Natural killer cell (primary cell): ENCODE measurements at regions of chr2 and their contacts with region 1.

Region 1: DNA sequence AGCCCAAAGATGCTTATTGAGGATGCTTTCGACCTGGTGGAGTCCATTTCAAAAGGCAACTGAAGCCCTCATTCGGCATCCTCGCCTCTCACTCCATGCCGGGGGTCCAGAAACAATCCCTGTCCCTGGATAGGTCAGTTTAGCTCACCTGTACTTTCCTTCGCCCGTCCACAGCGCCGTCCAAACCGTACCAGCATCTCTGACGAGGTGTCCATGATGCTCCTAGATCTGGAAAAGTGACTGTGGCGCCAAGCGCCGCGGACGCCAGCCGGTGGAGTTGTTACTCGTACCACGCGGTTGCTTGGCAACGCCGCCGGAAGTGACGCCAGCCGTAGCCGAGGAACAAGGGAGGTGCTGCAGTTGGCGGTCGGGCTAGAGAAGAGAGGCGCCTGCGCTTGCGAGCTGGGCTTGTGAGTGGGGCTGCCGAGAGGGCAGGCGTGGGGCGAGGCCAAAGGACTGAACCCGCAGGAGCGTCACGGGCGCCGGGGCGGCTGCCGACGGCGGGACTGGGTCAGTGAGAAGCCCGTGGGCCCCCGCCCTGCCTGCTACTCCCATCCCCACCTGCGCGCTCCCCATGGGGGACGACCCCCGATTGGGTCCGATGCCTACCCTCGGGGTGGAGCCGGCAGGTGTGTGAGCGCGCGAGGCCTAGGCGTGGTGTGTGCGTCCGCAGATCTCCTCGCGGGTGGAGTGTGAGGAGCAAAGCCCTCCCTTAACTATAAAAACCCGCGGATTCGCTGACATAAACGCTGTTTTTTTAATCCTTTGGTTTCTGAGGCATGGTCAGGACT is at the starts of genes CFAP210 and PHOSPHO2:
- DNase-seq: peak; percentile 99
- ATAC-seq: peak; percentile 93 to 99 (median 94)
- H3K4me3 ChIP-seq: peak within 1 kb of the TSS; percentile 64
- H3K4me3 Mint-ChIP-seq: peak within 1 kb of the TSS; percentile 97
- H3K27ac ChIP-seq: peak within 1 kb of the TSS; percentile 90
- H3K27ac Mint-ChIP-seq: peak within 1 kb of the TSS; percentile 97 to 98
- H3K4me1 ChIP-seq: peaks cover 11% of the 10 kb centered on the region
- H3K4me1 Mint-ChIP-seq: peaks cover 17 to 19% of the 10 kb centered on the region in 2 donors
- H3K27me3 ChIP-seq: peaks cover 3% of the 10 kb centered on the region
- H3K27me3 Mint-ChIP-seq: peaks cover 15 to 23% of the 10 kb centered on the region in 2 donors
- CTCF ChIP-seq: no peak
- total RNA-seq, gene CFAP210: 0.27 to 8.4 (median 1.5) TPM
- total RNA-seq, gene PHOSPHO2: 3.6 to 9.5 (median 5.8) TPM

Region 2: GRCh38 chr2:169584005-169584877 is 110.1 kb before region 1 on chr2 and contains the start of gene PPIG:
- intact Hi-C with region 1: loop called (anchors 2 kb)
- DNase-seq: peak; percentile 85 to 97
- ATAC-seq: peak; percentile 86 to 93 (median 87)
- H3K4me3 ChIP-seq: peak within 1 kb of the TSS; percentile 98
- H3K4me3 Mint-ChIP-seq: peak within 1 kb of the TSS; percentile 96
- H3K27ac ChIP-seq: peak within 1 kb of the TSS; percentile 99
- H3K27ac Mint-ChIP-seq: peak within 1 kb of the TSS; percentile 97 to 99
- H3K4me1 ChIP-seq: peaks cover 10% of the 10 kb centered on the region
- H3K4me1 Mint-ChIP-seq: peaks cover 31 to 32% of the 10 kb centered on the region in 2 donors
- H3K27me3 ChIP-seq: no peaks in the 10 kb centered on the region
- H3K27me3 Mint-ChIP-seq: no peaks in the 10 kb centered on the region
- CTCF ChIP-seq: no peak
- total RNA-seq, gene PPIG: 42.2 to 58.3 (median 56.1) TPM

Region 3: DNA sequence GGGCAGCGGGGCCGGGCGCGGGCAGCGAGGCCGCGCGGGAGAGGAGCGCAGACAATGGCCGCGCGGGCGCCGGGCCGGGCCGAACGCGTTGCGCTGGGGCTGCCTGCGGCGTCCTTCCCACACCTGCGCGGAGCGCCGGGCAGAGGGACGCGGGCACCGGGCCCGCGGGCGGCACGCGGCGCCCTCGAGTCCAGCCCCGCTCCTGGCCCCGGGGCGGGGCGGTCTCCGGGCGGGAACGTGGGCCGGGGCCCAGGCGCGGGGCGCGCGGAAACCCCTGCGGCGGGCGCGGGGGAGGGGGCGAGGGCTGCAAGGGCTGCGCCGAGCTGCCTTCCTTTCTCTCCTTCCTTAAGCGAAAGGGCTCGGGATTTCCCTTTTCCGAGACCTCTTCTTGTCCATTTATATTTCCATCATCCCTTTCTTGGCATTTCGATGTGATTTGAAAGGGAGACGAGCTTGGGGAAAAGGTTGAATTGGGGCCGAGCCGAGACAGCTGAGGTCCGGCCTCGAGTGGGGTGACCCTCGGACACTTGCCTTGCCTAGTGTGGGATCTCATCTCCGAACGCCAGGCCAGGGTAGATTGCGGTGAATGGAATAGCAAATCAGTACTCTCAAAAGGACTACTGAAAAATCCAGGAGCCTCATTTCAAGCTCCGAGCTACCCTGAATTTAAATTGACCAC is 40.0 kb after region 1 on chr2:
- intact Hi-C with region 1: loop called (anchors 5 kb)
- DNase-seq: peak; percentile 19 to 22
- ATAC-seq: peak; percentile 41 to 54 (median 42)
- H3K4me3 ChIP-seq: peak overlapping the region; percentile 37
- H3K4me3 Mint-ChIP-seq: peak overlapping the region; percentile 85
- H3K27ac ChIP-seq: no peak overlapping the region
- H3K27ac Mint-ChIP-seq: peak overlapping the region in 1 of 2 donors; percentile 88
- H3K4me1 ChIP-seq: peaks cover 17% of the 10 kb centered on the region
- H3K4me1 Mint-ChIP-seq: peaks cover 8 to 24% of the 10 kb centered on the region in 2 donors
- H3K27me3 ChIP-seq: peaks cover 5% of the 10 kb centered on the region
- H3K27me3 Mint-ChIP-seq: peaks cover 7 to 29% of the 10 kb centered on the region in 2 donors
- CTCF ChIP-seq: no peak

Region 4: GRCh38 chr2:169746240-169746639 is 51.9 kb after region 1 on chr2:
- intact Hi-C with region 1: no loop called
- DNase-seq: no peak
- ATAC-seq: no peak
- H3K4me3 ChIP-seq: no peak overlapping the region
- H3K4me3 Mint-ChIP-seq: no peak overlapping the region
- H3K27ac ChIP-seq: no peak overlapping the region
- H3K27ac Mint-ChIP-seq: no peak overlapping the region
- H3K4me1 ChIP-seq: no peaks in the 10 kb centered on the region
- H3K4me1 Mint-ChIP-seq: peaks cover 0 to 2% of the 10 kb centered on the region in 2 donors
- H3K27me3 ChIP-seq: no peaks in the 10 kb centered on the region
- H3K27me3 Mint-ChIP-seq: no peaks in the 10 kb centered on the region
- CTCF ChIP-seq: no peak

Region 5: DNA sequence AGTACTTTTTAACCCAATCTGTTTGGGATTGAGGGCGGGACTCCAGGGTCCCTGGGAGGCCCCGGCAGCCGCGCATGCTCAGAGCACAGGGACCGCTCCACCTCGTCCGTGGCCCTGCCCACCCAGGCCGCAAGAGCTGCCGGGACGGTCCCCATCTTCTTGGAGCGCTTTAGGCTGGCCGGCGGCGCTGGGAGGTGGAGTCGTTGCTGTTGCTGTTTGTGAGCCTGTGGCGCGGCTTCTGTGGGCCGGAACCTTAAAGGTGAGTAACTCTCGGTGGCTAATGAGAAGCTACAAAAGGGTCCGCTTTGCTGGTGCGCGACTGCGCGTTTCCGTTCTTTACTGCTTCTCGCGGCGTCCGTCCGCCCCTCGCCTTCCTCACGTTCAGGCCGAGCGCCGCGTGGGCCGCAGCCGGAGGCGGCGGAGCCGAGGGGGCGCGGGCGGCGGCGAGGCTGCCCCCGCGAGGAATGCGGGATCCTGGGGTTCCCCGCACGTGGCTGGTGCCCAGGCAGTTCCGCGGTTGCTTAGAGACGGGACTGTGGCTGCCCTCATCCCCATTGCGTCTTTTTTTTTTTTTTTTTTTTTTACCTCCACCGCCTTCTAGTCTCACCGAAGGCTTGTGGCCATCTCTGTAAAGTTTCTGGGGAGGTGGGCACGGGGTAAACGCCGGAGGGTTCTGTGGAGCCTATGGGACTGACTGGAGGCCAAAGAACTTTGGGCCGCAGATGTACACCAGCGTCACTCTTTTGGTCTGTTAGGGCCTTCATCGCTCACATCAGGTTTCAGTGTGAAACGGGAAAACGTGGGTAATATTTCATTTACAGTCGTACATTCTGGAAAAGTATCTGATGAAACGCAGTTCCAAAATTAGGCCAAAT is 104.6 kb after region 1 on chr2 and contains the start of gene SSB:
- intact Hi-C with region 1: loop called (anchors 10 kb)
- DNase-seq: peak; percentile 84 to 95
- ATAC-seq: peak; percentile 92 to 96 (median 92)
- H3K4me3 ChIP-seq: peak within 1 kb of the TSS; percentile 65
- H3K4me3 Mint-ChIP-seq: peak within 1 kb of the TSS; percentile 90
- H3K27ac ChIP-seq: peak within 1 kb of the TSS; percentile 89
- H3K27ac Mint-ChIP-seq: peak within 1 kb of the TSS; percentile 90 to 93
- H3K4me1 ChIP-seq: peaks cover 5% of the 10 kb centered on the region
- H3K4me1 Mint-ChIP-seq: peaks cover 22% of the 10 kb centered on the region in 2 donors
- H3K27me3 ChIP-seq: no peaks in the 10 kb centered on the region
- H3K27me3 Mint-ChIP-seq: peaks cover 0 to 2% of the 10 kb centered on the region in 2 donors
- CTCF ChIP-seq: no peak
- total RNA-seq, gene SSB: 95.5 to 125 (median 102) TPM

Region 6: DNA sequence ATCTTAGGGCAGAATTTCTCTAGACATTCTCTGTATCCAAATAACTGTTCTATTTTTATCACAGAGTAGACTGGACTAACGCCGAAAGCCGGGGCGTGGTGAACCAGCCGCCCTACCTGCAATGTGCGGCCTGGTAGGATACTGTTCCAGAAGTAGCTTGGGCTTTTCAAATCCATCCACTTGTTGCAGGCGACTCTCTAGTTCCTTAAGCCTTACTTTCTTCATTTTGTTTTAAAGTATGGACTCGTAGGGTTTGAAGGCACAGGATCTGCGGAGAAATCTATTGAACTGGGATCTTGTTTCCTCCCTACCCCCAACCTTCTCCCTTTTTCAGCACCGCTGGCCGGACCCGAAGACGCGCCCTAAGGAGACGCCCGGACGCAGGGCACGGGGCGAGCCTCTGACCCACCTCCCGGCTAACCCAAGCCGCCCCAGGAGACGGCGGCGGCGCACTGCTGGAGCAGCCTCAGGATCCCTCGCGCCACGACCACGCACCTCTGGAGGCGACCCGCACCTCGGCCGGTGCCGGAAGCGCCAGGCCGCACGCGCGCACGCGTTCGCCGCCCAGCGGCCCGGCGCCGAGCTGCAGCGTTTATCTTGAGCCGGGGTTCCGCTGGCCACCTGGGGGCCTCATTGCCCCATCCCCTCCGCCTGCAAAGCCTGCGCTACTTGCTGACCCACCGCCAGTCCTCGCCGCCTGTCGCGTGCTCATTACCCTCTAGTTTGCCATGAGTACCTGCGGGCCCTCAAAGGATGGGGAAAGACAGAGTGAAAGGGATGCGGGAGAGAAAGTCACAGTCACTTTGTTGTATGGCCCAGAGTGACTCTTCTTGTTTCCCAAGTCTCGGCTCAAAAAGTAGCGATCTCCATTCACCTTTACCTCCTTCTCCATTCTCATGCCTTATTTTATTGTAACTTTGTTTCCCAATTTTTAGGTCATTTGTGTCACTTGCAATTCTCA is 130.3 kb after region 1 on chr2 and contains the start of gene METTL5:
- intact Hi-C with region 1: loop called (anchors 10 kb)
- DNase-seq: peak; percentile 78 to 89
- ATAC-seq: peak; percentile 71 to 84 (median 75)
- H3K4me3 ChIP-seq: peak within 1 kb of the TSS; percentile 90
- H3K4me3 Mint-ChIP-seq: peak within 1 kb of the TSS; percentile 94
- H3K27ac ChIP-seq: peak within 1 kb of the TSS; percentile 63
- H3K27ac Mint-ChIP-seq: peak within 1 kb of the TSS; percentile 77 to 87
- H3K4me1 ChIP-seq: peaks cover 28% of the 10 kb centered on the region
- H3K4me1 Mint-ChIP-seq: peaks cover 62 to 65% of the 10 kb centered on the region in 2 donors
- H3K27me3 ChIP-seq: no peaks in the 10 kb centered on the region
- H3K27me3 Mint-ChIP-seq: no peaks in the 10 kb centered on the region
- CTCF ChIP-seq: peak; percentile 94
- total RNA-seq, gene METTL5: 14.7 to 28.2 (median 21.3) TPM